ENCODE measurements at regions of chr1 and their contacts with region 1.

Region 1: DNA sequence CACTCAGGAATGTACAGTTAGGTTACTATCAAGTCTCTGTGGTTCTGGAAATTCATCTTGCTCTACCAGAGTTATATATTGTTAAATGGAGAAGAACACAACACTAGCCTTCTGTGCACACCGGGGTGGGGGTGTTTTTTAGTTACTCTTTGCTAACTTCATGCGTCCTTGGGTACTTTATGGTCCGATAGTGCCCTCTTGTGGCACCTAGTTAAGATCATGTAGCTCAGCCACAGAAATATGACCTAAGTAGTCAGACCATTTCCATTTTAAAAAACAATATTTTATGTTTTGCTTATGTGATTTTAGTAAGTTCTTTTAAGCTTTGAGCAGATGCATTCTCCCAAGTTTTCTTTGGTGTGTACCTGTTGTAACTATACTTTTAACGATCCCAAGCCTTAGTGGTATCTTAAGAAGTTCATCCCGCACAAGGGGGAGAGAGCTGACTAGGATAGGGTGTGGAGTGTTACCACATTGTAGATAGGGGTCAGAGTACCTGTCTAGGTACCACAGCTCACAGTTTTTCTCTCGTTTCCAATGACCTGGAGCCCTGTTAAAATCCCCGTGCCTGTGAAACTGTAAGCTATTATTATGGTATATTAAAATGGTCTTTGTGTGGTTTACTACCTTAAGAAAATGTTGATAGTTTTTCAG is 20.6 kb upstream of the SH3D21 start:
- DNase-seq: peak; percentile 90
- H3K4me3 ChIP-seq: no peak overlapping the region
- H3K27ac ChIP-seq: peak overlapping the region; percentile 66 to 72
- H3K4me1 ChIP-seq: peaks cover 7% of the 10 kb centered on the region
- H3K27me3 ChIP-seq: no peaks in the 10 kb centered on the region
- CTCF ChIP-seq: peak; percentile 58 to 91 (median 82)
- POLR2A ChIP-seq: no peak

Region 2: DNA sequence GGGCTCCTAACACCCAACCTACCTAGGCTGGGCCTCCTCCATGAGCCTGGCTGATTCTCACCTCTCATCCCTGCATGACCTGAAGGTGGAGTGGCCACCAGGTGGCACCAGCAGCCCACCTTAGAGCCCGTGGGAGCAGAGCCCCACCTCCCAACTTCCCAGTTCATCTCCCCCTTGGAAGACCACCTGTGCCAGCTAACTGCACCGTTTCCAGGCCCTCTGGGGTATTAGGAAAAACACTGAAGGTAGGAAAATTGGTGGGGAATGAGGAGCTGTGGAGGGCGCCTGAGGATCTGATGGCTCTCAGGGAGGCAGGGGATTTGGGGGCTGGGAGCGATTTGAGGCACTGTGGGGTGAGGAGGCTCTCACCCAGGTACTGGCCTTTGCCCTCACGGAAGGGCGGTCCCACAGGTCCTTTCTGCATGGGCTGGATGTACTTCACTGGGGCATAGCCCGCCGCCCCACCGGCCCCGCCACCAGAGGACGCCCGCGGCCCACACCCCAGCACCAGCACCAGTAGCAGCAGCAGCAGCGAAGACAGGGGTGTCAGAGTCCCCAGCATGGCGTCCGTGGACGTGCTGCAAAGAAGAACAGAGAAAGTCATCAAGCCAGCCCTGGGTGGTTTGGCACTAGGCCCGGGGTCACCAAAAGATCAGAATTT is 185.8 kb before region 1 on chr1:
- intact Hi-C with region 1: loop called (anchors 2 kb)
- DNase-seq: peak; percentile 70
- H3K4me3 ChIP-seq: no peak overlapping the region
- H3K27ac ChIP-seq: no peak overlapping the region
- H3K4me1 ChIP-seq: no peaks in the 10 kb centered on the region
- H3K27me3 ChIP-seq: no peaks in the 10 kb centered on the region
- CTCF ChIP-seq: peak; percentile 81 to 93 (median 84)
- POLR2A ChIP-seq: no peak

Region 3: DNA sequence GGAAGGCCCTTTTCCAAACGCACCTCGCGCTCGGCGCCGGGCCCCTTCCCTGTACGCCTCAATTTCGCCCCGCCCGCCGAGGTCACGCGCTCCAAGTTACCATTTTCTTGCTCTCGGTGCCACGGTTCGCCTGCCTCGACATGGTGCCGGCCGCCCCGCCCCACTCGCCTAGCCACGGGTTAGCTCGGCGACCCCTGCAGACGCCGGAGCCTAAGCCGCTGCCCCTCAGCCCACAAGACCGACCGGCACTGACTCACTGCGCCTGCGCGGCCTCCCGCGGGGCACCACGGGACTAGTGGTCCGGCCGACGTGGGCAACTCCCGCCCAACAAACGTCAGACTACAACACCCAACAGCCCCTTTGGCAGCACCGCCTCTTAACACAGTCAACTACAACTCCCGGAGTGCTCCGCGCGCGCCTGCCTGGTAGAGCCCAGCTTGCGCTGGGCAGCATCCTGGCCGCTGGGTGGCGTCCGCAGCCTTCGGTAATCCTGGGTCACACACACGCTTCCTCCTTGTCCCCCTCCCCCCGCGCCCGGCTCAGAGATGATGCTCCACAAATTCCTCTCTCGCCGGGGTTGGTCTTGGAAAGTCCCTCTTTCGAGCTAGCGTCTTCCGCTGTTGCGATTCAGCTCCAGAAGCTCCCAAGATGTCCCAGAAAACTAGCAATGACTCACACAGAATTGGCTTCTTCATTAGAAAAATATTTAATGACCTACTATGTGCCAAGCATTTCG is 136.2 kb before region 1 on chr1 and contains the start of gene TRAPPC3:
- intact Hi-C with region 1: loop called (anchors 2 kb)
- DNase-seq: peak; percentile 100
- H3K4me3 ChIP-seq: peak within 1 kb of the TSS; percentile 75 to 84
- H3K27ac ChIP-seq: peak within 1 kb of the TSS; percentile 93 to 98
- H3K4me1 ChIP-seq: peaks cover 20% of the 10 kb centered on the region
- H3K27me3 ChIP-seq: no peaks in the 10 kb centered on the region
- CTCF ChIP-seq: peak; percentile 78 to 100 (median 100)
- POLR2A ChIP-seq: peak; percentile 95
- total RNA-seq, gene TRAPPC3: 90.0 to 92.5 TPM

Region 4: GRCh38 chr1:36187800-36188593 is 97.6 kb before region 1 on chr1:
- intact Hi-C with region 1: loop called (anchors 10 kb)
- DNase-seq: peak; percentile 89
- H3K4me3 ChIP-seq: no peak overlapping the region
- H3K27ac ChIP-seq: peak overlapping the region; percentile 81 to 90
- H3K4me1 ChIP-seq: peaks cover 11% of the 10 kb centered on the region
- H3K27me3 ChIP-seq: no peaks in the 10 kb centered on the region
- CTCF ChIP-seq: peak; percentile 51 to 97 (median 95)
- POLR2A ChIP-seq: no peak

Region 5: GRCh38 chr1:36223993-36224536 is 61.5 kb before region 1 on chr1 and contains the start of gene THRAP3:
- intact Hi-C with region 1: loop called (anchors 5 kb)
- DNase-seq: peak; percentile 100
- H3K4me3 ChIP-seq: peak within 1 kb of the TSS; percentile 66 to 68
- H3K27ac ChIP-seq: peak within 1 kb of the TSS; percentile 98
- H3K4me1 ChIP-seq: peaks cover 11% of the 10 kb centered on the region
- H3K27me3 ChIP-seq: no peaks in the 10 kb centered on the region
- CTCF ChIP-seq: peak in 1 of 4 experiments; percentile 3
- POLR2A ChIP-seq: peak; percentile 94
- total RNA-seq, gene THRAP3: 100 to 123 TPM